OCI-LY7 (cell line): ENCODE measurements at regions of chr4 and their contacts with region 1.

Region 1: DNA sequence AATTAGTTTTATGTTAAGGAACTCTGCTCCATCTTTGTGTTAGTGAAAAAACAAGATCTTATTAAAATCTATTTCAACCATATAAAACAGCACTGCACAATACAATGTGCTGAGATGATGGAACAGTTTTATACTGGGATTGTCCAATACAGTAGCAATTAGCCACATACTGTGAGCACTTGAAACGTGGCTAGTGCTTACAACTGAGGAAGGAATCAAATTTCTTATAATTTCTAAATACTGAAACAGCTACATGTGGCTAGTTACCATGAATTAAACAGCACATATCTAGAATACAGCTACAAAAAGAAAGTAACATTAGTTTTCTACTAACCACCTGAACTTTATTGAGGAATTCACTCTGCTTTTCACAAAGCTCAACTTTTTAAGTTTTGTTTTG is 14.7 kb downstream of the NFXL1 start:
- DNase-seq: no peak
- H3K4me3 ChIP-seq: no peak overlapping the region
- H3K27ac ChIP-seq: no peak overlapping the region
- H3K4me1 ChIP-seq: no peaks in the 10 kb centered on the region
- CTCF ChIP-seq: no peak

Region 2: GRCh38 chr4:47510506-47511143 is 389.0 kb before region 1 on chr4:
- CTCF ChIA-PET with region 1: no interaction called
- POLR2A ChIA-PET with region 1: no interaction called
- intact Hi-C with region 1: no loop called
- DNase-seq: no peak
- H3K4me3 ChIP-seq: no peak overlapping the region
- H3K27ac ChIP-seq: no peak overlapping the region
- H3K4me1 ChIP-seq: peaks cover 6% of the 10 kb centered on the region
- CTCF ChIP-seq: peak; percentile 56

Region 3: GRCh38 chr4:47762376-47763266 is 137.0 kb before region 1 on chr4:
- CTCF ChIA-PET with region 1: no interaction called
- POLR2A ChIA-PET with region 1: no interaction called
- intact Hi-C with region 1: no loop called
- DNase-seq: no peak
- H3K4me3 ChIP-seq: no peak overlapping the region
- H3K27ac ChIP-seq: no peak overlapping the region
- H3K4me1 ChIP-seq: no peaks in the 10 kb centered on the region
- CTCF ChIP-seq: no peak

Region 4: DNA sequence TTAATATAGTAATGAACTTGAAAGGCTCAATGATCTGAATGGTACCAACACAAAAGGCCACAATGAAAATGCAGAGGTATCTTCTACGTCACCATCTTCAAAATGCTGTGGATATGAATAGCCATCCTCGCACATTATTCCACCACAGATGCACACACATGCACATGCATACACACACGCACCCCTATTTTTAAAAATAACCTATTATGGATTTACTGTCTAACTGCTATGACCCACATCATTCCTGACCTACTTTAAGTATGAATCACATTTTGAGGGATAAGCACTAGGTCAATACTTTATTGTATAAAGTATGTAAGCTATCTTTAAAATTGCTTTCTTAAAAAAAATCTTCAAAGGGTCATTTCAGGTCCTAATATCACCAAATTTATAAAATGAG is 37.3 kb before region 1 on chr4:
- CTCF ChIA-PET with region 1: no interaction called
- POLR2A ChIA-PET with region 1: no interaction called
- intact Hi-C with region 1: loop called (anchors 5 kb)
- DNase-seq: no peak
- H3K4me3 ChIP-seq: no peak overlapping the region
- H3K27ac ChIP-seq: no peak overlapping the region
- H3K4me1 ChIP-seq: no peaks in the 10 kb centered on the region
- CTCF ChIP-seq: no peak